ENCODE measurements at regions of chr19 and their contacts with region 1.

Region 1: GRCh38 chr19:6521718-6522646 is 8.8 kb upstream of the TNFSF9 start:
- DNase-seq: no peak

Region 2: DNA sequence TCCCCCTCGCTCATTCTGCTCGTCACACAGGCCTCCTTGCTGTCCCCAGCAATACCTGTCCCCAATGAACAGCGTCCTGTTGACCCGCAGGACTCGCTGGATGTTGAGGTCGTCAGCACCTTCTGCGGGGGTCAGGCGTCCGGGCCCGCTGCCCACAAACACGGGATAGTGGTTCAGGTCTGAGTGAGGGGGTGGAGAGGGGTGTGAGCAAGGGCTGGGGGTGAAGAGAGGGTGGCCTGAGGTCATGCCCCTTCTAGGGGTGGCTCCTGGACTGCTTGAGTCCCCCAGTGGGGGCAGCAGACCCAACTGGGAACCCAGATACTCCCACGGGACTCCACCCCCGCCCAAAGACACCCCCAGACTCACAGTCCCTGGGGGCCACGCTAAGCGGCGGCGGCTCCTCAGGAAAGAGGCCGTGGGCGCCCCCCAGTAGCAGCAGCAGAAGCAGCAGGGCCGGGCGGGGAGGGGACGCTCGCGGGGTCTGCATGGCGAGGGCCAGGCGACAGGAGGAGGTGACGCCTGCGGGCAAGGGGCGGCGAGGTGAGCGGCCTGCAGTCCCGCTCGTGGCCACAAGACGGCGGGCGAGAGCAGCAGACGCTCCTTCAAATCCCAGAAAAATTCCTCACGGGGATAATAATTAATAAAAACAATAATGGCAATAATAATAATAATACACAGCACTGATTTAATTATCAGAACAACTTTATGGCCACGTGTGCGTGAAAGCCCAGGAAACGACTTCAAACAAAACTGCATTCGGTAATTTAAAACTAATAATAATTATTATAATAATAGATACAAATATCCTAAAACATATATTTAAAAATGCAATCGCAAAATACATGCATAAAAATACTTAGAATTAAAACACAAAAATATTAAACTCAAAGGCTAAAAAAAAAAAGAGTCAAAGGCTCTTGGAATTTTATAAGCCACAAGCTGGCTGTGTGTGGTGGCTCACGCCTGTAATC is 1963.7 kb before region 1 on chr19:
- intact Hi-C with region 1: no loop called
- DNase-seq: no peak

Region 3: GRCh38 chr19:6423499-6424194 is 98.3 kb before region 1 on chr19:
- intact Hi-C with region 1: no loop called
- DNase-seq: peak; percentile 82

Region 4: GRCh38 chr19:6626764-6627163 is 104.8 kb after region 1 on chr19:
- intact Hi-C with region 1: loop called in 1 of 2 experiments (anchors 10 kb)
- DNase-seq: no peak

Region 5: GRCh38 chr19:6663236-6664201 is 141.5 kb after region 1 on chr19:
- intact Hi-C with region 1: no loop called
- DNase-seq: no peak

Measured in posterior vena cava (tissue), 2 donors.